ENCODE measurements at regions of chr4 and their contacts with region 1.

Region 1: DNA sequence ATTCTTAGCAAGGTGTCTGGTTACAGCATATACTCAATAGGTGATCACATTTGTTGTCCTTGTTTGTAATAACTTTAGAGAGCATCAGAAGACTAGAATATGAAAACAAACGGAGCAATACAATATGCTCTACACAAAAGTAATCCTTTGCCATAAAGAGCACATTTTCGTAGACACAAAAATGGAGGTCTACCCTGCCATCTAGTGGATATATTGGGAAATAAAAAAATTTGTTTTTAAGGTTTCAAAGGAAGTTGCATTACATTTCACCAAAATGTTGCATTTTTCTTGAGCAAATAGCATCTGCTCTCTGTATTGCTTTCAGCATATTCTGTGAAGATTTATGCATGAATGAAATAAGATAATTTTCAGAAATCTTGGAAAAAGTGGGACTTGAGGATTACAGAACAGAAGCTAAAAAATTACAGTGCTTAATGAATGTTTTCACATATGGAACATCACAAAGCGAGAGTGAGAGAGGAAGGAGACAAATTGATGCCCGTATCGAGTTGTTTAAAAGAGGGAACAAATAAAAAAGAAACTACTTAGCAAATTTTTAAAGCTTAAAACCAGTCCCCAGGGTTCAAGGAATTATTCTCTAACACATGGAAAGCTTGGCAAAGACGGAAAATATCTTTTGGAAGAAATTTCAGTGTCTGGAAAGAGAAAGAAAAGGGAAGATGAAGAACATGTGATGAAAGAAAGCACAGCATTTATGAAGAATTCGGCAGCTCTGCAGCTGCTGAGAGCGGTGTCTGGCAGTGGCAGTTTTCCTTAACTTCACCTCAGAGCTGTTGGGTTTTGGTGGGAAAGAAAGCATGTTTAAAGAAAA is 390.1 kb downstream of the ANKRD50 start:
- DNase-seq: peak; percentile 8
- ATAC-seq: peak; percentile 50; the same call in 1 of the 2 replicates
- H3K4me3 ChIP-seq: no peak overlapping the region
- H3K27ac ChIP-seq: no peak overlapping the region
- H3K4me1 ChIP-seq: no peaks in the 10 kb centered on the region
- H3K27me3 ChIP-seq: no peaks in the 10 kb centered on the region
- CTCF ChIP-seq: peak; percentile 34 to 66 (median 43); a peak in 5 of 6 replicates
- POLR2A ChIP-seq: no peak
- RAD21 ChIP-seq: peak; percentile 68

Region 2: GRCh38 chr4:123770884-123771283 is 551.6 kb before region 1 on chr4:
- CTCF ChIA-PET with region 1: interaction called, 7 read pairs
- POLR2A ChIA-PET with region 1: no interaction called
- RAD21 ChIA-PET with region 1: no interaction called
- intact Hi-C with region 1: loop called (anchors 5 kb)
- DNase-seq: no peak
- ATAC-seq: no peak
- H3K4me3 ChIP-seq: no peak overlapping the region
- H3K27ac ChIP-seq: no peak overlapping the region
- H3K4me1 ChIP-seq: no peaks in the 10 kb centered on the region
- H3K27me3 ChIP-seq: no peaks in the 10 kb centered on the region
- CTCF ChIP-seq: no peak
- POLR2A ChIP-seq: no peak
- RAD21 ChIP-seq: no peak

Region 3: DNA sequence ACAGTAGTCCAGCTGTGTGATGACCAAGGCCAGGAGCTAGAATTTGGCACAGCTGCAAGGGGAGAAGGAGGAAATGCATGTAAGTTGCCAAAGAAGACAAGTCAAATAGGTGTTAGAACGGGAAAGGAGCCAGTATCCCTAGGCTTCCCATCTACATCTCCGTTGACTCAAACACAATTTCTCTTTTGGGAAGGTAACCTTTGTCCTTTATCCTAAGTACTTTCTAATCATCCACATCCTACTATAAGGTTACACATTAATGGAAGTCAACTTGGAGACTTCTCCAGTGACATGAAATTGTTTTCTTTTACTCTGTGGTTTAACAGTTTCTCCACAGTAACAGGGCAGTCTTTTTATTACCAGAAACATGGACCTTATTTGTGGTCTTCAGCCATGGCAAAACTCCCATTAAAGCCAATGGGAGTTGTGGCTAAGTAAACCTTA is 229.9 kb before region 1 on chr4:
- CTCF ChIA-PET with region 1: no interaction called
- POLR2A ChIA-PET with region 1: no interaction called
- RAD21 ChIA-PET with region 1: no interaction called
- intact Hi-C with region 1: no loop called
- DNase-seq: no peak
- ATAC-seq: no peak
- H3K4me3 ChIP-seq: no peak overlapping the region
- H3K27ac ChIP-seq: no peak overlapping the region
- H3K4me1 ChIP-seq: no peaks in the 10 kb centered on the region
- H3K27me3 ChIP-seq: no peaks in the 10 kb centered on the region
- CTCF ChIP-seq: no peak
- POLR2A ChIP-seq: no peak
- RAD21 ChIP-seq: no peak

Measured in HCT116 (cell line).